Right lobe of liver (tissue), 6 donors: ENCODE measurements at regions of chr3 and their contacts with region 1.

Region 1: DNA sequence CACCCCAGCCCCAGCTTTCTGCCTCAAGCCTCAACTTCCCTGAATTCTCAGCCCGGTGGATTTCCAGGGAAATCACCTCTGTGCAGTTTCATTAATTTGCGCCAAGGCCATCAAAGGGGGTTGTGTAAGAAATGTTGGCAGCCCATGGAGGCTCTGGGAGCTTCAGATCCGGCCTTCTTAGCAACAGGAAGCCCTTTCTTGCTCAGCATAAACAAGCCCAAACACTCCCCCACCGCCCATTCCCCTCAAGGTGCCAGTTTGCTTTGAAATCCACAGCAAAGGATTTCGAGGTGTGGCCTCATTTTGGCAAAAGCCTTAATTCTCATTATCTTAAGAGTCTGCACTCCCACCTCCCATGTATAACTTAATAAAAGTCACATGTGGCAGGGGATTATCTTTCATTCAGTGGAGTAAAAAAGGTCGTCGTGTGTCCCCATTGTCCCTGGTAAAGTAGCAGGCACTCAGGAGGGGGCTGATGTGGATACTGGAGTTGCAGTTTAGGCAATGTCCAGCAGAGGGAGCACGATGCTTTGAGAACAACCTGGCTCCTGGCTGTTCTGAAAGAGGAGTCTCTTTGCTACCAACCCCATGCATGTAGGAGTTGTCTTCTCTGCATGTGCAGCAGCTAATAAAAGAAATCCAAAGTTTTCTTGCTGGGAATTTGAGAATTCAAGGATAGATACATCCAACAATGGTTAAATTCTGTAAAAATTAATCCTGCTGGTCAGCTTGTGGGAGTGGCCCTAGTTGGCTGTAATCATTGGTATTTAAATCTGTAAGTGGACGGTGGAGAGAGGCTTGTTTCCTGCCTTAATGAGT is 39.5 kb downstream of the EBLN2 start:
- DNase-seq: peak; percentile 66 to 76 (median 69)
- ATAC-seq: peak; percentile 95 to 99 (median 98)
- H3K4me3 ChIP-seq: no peak overlapping the region
- H3K27ac ChIP-seq: no peak overlapping the region
- H3K4me1 ChIP-seq: no peaks in the 10 kb centered on the region
- H3K27me3 ChIP-seq: no peaks in the 10 kb centered on the region
- CTCF ChIP-seq: peak; percentile 89 to 93 (median 92)
- POLR2A ChIP-seq: no peak

Region 2: DNA sequence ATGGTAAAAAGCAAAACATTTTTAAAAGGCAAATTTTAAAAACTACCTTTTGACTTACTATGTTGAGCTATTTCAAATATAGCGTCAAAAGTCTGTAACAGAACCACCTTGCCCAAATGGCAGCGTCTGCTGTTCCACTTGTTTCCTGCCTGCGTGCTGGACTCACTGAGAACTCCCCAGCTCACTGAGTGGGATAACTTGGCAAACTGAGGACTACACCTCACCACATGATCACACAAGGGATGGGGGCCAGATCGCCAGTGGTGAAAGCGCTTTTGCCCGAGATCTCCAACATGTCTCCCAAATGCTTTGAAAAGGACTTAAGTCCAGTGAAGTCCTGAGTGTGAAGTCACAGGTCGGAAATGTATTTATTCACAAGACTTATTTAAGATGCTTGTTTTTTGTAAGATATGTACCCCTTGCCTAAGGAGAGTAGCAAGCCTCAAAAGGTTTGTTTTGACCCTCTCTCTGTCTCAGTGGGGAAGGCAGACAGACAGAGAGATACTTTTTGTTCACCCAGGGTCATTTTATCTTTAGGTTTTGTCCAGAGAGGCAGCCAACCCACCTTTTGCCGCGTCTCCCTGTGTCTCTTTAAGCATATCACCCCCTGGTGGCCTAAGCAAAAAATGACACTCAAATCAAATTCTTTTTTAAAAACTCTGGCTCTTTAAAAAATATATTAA is 331.2 kb after region 1 on chr3:
- intact Hi-C with region 1: loop called in 1 of 2 experiments (anchors 10 kb)
- DNase-seq: no peak
- ATAC-seq: peak in 1 of 4 donors; percentile 36
- H3K4me3 ChIP-seq: no peak overlapping the region
- H3K27ac ChIP-seq: no peak overlapping the region
- H3K4me1 ChIP-seq: no peaks in the 10 kb centered on the region
- H3K27me3 ChIP-seq: no peaks in the 10 kb centered on the region
- CTCF ChIP-seq: peak; percentile 44 to 67 (median 62)
- POLR2A ChIP-seq: no peak

Region 3: GRCh38 chr3:73502609-73503583 is 401.9 kb after region 1 on chr3:
- intact Hi-C with region 1: loop called in 1 of 2 experiments (anchors 5 kb)
- DNase-seq: peak in 2 of 3 donors; percentile 52 to 63
- ATAC-seq: peak; percentile 92 to 96 (median 94)
- H3K4me3 ChIP-seq: no peak overlapping the region
- H3K27ac ChIP-seq: no peak overlapping the region
- H3K4me1 ChIP-seq: no peaks in the 10 kb centered on the region
- H3K27me3 ChIP-seq: no peaks in the 10 kb centered on the region
- CTCF ChIP-seq: peak; percentile 79 to 87 (median 84)
- POLR2A ChIP-seq: no peak